ENCODE measurements at regions of chr15 and their contacts with region 1.

Region 1: GRCh38 chr15:99565299-99566156 is at the start of gene MEF2A:
- DNase-seq: peak; percentile 97
- H3K4me3 ChIP-seq: peak within 1 kb of the TSS; percentile 87
- H3K27ac ChIP-seq: peak within 1 kb of the TSS; percentile 70
- H3K4me1 ChIP-seq: peaks cover 29% of the 10 kb centered on the region
- CTCF ChIP-seq: no peak
- total RNA-seq, gene MEF2A: 27.3 and 28.0 TPM in 2 replicates

Region 2: DNA sequence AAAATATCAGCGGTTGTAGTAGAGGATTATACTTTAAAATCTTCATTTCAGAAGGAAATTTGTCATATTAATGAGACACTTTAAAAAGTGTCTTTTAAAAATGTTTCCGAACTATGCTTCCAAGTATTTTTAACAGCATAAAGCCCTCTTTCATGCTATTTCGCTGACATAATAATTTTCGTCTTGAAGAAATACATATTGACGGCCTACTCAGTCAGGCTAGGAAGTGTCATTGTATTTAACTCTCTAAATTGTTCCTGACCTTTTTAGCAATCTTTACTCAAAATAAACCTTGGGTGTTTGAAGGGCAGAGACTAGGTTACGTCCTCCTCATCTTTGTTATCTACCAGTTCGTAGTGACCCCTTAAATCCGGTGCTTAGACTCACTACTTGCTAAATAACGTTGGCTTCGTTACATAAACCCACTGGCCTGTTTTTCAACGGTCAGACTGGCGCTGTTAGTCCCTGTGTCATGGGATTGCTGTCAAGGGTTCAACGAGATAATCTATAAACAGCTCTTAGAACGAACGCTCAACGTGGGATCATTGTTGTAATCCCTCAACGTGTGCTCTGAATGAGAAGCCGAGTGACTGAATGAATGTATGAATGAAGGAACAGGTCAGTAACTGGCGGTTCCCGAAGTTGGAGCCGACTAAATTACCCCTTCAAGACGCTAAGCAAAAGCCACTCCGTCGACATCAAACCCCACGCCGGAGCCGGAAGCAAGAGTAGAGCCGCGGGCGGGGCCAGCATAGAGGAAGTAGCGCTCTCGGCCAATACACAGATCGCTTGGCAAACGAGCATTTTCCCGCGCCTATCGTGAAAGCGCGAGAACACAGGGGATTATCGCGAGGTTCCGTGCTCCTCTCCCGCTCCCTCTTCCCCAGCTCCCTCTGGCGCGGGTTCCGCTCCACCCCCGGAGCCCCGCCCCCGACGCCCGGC is 314.8 kb before region 1 on chr15:
- CTCF ChIA-PET with region 1: no interaction called
- POLR2A ChIA-PET with region 1: interaction called, 3 read pairs
- intact Hi-C with region 1: loop called (anchors 5 kb)
- DNase-seq: peak; percentile 99
- H3K4me3 ChIP-seq: peak overlapping the region; percentile 97
- H3K27ac ChIP-seq: peak overlapping the region; percentile 88
- H3K4me1 ChIP-seq: peaks cover 30% of the 10 kb centered on the region
- CTCF ChIP-seq: no peak

Region 3: DNA sequence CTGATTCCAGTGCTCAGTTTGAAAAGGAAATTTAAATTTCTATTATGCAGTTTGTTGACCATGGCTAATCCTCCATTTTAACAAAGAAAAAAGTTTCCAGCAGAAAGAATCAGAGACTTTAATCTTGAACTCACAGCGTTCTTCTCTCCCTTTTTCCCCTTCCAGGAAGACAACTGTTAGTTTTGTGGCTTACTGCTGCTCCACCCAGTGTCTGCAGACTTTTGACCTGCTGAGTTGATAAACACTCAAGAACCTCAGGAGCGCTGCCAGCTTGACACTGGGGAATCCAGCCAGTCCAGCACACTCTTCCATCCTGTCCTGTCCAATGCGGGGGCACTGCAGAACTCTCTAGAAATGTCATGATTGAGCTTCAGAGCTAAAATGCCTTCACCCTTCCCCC is 179.7 kb before region 1 on chr15:
- CTCF ChIA-PET with region 1: no interaction called
- POLR2A ChIA-PET with region 1: no interaction called
- intact Hi-C with region 1: no loop called
- DNase-seq: no peak
- H3K4me3 ChIP-seq: no peak overlapping the region
- H3K27ac ChIP-seq: no peak overlapping the region
- H3K4me1 ChIP-seq: no peaks in the 10 kb centered on the region
- CTCF ChIP-seq: no peak

Region 4: DNA sequence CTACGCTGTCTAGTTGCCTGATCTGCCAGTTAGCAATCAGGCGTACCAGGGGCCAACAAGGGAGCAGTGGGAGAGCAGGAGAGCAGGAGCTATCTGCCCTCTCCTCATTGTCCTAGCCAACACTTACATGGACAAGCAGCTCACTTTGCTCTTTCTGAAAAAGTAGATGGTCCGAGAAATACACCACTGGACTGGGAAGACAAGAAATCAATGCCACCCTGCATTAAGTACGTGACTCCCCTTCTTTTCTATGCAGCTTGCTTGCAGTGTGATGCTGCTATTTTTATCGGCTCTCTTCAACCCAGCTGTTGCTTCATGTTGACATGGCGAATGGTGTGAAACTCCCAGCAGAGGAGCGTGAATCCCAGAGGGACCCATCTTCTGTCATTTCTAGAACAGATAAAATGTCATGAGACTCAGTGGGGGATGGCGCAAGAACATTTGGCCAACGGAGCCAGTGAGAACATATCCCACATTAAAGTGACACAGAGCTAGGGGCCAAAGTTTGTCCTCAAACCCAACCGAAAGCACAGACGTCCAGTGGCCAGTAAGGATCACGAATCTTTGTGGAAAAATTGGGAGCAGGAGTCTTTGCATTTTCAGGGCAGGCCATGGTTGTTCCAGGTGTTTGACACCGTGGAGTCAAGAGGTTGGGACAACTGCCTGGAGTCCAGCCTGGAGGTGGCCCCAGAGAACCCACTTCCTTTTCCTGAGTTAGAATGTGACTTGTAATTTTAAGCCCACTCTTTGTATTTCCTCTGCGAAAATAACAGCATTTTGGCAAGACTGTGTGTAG is 53.5 kb before region 1 on chr15:
- CTCF ChIA-PET with region 1: no interaction called
- POLR2A ChIA-PET with region 1: interaction called, 10 read pairs
- intact Hi-C with region 1: loop called (anchors 1 kb)
- DNase-seq: peak; percentile 92
- H3K4me3 ChIP-seq: peak overlapping the region; percentile 45
- H3K27ac ChIP-seq: peak overlapping the region; percentile 85
- H3K4me1 ChIP-seq: peaks cover 74% of the 10 kb centered on the region
- CTCF ChIP-seq: peak; percentile 39; the same call in 1 of the 2 replicates

Region 5: GRCh38 chr15:99582508-99582960 is 17.0 kb after region 1 on chr15:
- CTCF ChIA-PET with region 1: no interaction called
- POLR2A ChIA-PET with region 1: interaction called, 14 read pairs
- intact Hi-C with region 1: no loop called
- DNase-seq: no peak
- H3K4me3 ChIP-seq: no peak overlapping the region
- H3K27ac ChIP-seq: no peak overlapping the region
- H3K4me1 ChIP-seq: no peaks in the 10 kb centered on the region
- CTCF ChIP-seq: no peak